ENCODE measurements at regions of chr21 and their contacts with region 1.

Region 1: DNA sequence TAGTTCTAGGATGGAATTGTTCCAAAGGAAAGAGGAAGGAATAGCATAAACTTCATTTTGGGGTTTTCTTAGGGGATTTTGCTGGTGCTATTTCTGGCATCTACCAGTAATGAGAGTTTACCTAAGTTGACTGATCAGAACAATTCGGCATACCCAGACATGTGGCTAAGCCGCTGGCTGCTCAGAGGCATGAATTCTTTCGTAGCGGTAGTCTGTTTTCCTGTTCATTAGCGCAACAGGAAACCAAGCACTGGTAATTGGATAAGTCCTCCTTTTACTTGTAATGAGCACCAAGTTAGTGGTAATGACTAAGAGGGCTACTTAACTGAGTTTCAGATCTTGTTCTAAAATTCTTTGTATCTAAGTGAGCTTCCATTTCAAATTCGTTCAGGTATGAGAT is 38.6 kb downstream of the C21orf91 start:
- DNase-seq: peak in 4 of 5 donors; percentile 35 to 75 (median 53)
- H3K4me3 ChIP-seq: peak overlapping the region; percentile 16
- H3K4me3 Mint-ChIP-seq: peak overlapping the region; percentile 1 to 81 (median 67)
- H3K27ac ChIP-seq: peak overlapping the region; percentile 48
- H3K27ac Mint-ChIP-seq: peak overlapping the region; percentile 79 to 98 (median 94)
- H3K4me1 ChIP-seq: peaks cover 72% of the 10 kb centered on the region
- H3K4me1 Mint-ChIP-seq: peaks cover 82 to 92% (median 87%) of the 10 kb centered on the region in 3 donors
- H3K27me3 ChIP-seq: no peaks in the 10 kb centered on the region
- H3K27me3 Mint-ChIP-seq: no peaks in the 10 kb centered on the region

Region 2: GRCh38 chr21:17622018-17622417 is 158.5 kb before region 1 on chr21:
- CTCF ChIA-PET with region 1: no interaction called
- POLR2A ChIA-PET with region 1: no interaction called
- DNase-seq: no peak
- H3K4me3 ChIP-seq: no peak overlapping the region
- H3K4me3 Mint-ChIP-seq: no peak overlapping the region
- H3K27ac ChIP-seq: no peak overlapping the region
- H3K27ac Mint-ChIP-seq: no peak overlapping the region
- H3K4me1 ChIP-seq: no peaks in the 10 kb centered on the region
- H3K4me1 Mint-ChIP-seq: no peaks in the 10 kb centered on the region
- H3K27me3 ChIP-seq: peaks cover 5% of the 10 kb centered on the region
- H3K27me3 Mint-ChIP-seq: peaks cover 3 to 29% of the 10 kb centered on the region in 2 donors

Region 3: DNA sequence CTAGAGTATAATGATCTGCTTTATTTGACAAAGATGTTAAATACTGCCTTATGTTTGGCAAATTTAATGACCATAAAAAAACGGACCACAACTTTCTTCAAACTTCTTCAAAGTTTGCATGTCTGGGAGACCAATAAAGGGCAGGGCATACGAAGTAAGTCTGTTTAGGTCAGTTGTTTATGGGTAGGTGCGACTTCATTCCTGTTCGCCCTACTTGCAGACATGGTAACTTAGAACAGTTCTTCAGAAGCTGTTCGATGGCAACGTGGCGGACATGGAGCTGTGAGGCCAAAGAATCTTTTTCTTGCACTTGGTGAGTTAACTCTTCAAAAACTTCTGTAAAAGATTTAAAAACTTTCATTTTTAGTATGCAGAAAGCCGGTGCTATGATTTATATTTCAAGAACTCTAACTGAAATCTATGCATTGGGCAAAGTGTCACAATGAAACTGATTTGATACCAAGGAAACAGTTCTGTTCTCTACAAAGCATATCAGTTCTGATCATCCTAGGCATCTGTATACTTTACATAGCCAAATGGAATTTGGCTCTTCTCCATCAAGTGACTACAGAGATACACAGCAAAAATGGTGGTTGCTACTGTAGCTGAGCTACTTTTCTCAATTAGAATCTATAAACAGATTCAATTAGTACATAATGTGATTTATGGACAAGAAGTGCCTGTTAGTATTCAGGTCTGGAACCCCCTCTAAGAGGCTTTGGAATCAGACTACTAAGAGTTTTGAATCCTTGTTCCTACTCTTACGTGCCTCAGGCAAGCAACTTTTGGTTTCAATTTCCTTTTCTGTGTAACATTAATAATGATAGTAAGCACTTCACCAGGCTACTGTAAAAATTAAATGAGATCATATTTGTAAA is 12.9 kb after region 1 on chr21:
- CTCF ChIA-PET with region 1: interaction called, 11 read pairs
- POLR2A ChIA-PET with region 1: interaction called, 8 read pairs
- DNase-seq: peak in 1 of 5 donors; percentile 56
- H3K4me3 ChIP-seq: peak overlapping the region; percentile 52
- H3K4me3 Mint-ChIP-seq: peak overlapping the region; percentile 78 to 91 (median 87)
- H3K27ac ChIP-seq: peak overlapping the region; percentile 74
- H3K27ac Mint-ChIP-seq: peak overlapping the region; percentile 88 to 99 (median 96)
- H3K4me1 ChIP-seq: peaks cover 52% of the 10 kb centered on the region
- H3K4me1 Mint-ChIP-seq: peaks cover 71 to 99% (median 96%) of the 10 kb centered on the region in 3 donors
- H3K27me3 ChIP-seq: no peaks in the 10 kb centered on the region
- H3K27me3 Mint-ChIP-seq: peaks cover 0 to 2% of the 10 kb centered on the region in 2 donors